ENCODE measurements at regions of chr12 and their contacts with region 1.

Region 1: DNA sequence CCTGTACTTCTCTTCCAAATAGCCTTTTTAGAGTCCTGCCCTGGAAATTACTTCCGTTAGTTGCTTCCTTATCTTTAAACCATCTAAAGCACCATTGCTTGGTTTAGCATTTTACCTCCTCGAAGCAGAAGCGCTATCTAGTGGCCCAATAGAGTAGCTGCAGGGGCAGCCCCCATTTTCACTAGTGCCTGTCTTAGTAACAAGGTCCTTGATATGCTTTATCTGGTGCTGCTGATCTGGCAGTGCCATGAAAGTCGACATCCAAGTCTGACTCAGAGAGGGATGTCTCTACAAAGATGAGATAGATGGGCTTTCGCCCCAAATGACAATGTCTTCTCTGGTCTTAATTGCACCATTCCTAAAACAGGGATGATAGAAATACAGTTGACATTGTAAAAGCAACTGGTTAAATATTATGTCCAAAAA is 25.0 kb upstream of the CIT start:
- DNase-seq: peak; percentile 27
- ATAC-seq: peak; percentile 82
- H3K4me3 Mint-ChIP-seq: no peak overlapping the region
- H3K27ac Mint-ChIP-seq: no peak overlapping the region
- H3K4me1 Mint-ChIP-seq: peaks cover 4% of the 10 kb centered on the region
- H3K27me3 Mint-ChIP-seq: no peaks in the 10 kb centered on the region
- CTCF ChIP-seq: no peak

Region 2: DNA sequence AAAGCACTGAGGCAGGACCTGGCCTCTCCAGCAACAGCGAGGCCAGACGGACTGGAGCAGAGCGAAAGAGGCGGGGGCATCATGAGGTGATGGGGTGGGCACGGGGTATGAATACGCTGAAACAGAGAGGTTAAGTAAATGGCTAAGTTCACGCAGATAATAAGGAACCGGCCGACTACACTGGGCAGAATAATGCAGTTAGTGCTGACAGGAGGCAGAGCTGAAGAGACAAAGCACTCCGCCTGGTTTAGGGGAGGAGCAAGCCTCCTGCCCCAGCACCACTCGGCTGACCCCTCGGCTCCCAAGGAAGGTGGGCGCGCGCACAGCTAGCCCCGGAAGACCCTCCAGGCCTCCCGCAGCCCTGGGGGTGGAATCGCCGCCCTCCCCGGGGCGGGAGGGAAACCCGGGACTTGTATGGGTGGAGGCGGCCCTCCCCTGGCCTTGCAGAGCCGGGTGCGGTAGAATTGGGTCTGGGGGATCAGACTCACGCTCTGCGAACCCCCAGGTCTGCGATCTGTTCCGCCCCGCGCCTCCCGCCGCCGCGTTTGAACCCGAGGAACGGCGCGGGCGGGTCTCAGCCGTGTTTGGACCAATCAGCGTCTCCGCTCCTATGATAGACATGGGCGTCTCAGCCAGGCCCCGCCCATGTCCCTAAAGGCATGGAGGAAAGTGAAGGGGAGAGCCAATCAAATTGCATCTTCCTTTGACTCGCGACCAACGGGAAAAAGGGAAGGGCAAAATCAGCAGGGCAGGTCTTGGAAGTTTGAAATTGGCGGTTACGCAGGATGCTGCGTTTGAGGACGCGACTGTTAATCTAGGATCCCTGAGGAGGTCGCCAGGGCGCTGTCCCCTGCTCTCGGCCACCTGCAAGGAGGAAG is 25.1 kb before region 1 on chr12 and contains the start of gene CIT:
- CTCF ChIA-PET with region 1: interaction called, 6 read pairs
- POLR2A ChIA-PET with region 1: no interaction called
- intact Hi-C with region 1: loop called (anchors 1 kb)
- DNase-seq: peak; percentile 72
- ATAC-seq: peak; percentile 100
- H3K4me3 Mint-ChIP-seq: peak within 1 kb of the TSS; percentile 91
- H3K27ac Mint-ChIP-seq: peak within 1 kb of the TSS; percentile 0
- H3K4me1 Mint-ChIP-seq: peaks cover 12% of the 10 kb centered on the region
- H3K27me3 Mint-ChIP-seq: peaks cover 2% of the 10 kb centered on the region
- CTCF ChIP-seq: no peak
- total RNA-seq, gene CIT: 3.6 and 6.1 TPM in 2 replicates

Region 3: GRCh38 chr12:119942386-119942785 is 40.3 kb after region 1 on chr12:
- CTCF ChIA-PET with region 1: no interaction called
- POLR2A ChIA-PET with region 1: no interaction called
- intact Hi-C with region 1: no loop called
- DNase-seq: no peak
- ATAC-seq: no peak
- H3K4me3 Mint-ChIP-seq: no peak overlapping the region
- H3K27ac Mint-ChIP-seq: no peak overlapping the region
- H3K4me1 Mint-ChIP-seq: no peaks in the 10 kb centered on the region
- H3K27me3 Mint-ChIP-seq: peaks cover 10% of the 10 kb centered on the region
- CTCF ChIP-seq: no peak

Region 4: DNA sequence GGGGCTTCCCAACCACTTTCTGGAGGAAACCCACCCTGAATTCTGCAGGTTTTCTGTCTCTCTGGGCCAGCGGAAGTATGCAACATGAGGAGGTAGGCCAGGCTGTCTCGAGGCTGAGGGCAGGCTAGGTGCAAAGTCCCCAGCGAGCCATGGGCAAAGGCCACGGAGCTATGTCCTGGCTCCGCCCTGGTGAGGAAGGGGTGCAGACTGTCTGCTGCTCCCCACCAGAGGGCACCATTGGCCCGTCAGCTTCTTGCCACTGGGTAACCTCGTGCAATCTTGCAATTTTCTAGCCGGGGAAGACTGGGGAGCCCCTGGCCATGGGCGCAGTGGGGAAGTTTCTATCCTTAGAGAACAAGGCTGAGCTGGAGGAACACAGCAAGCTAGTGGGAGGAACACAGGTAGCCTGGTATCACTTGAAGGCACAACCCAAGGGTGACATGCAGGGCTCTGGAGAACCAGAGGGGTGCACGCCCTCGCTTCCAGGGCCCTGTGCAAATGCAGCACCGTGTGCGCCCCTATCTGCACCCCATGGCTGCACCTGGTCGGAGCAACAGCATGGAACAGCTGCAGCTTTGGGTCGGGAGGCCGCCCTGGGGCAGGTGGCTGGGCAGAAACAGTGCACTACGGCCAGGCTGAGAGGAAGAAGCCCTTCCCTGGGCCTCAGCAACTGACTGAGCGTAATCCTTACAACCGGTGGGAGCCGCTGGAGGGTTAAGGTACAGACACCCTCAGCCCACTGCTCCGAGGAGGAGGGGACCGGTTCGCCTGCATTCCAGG is 326.4 kb after region 1 on chr12:
- CTCF ChIA-PET with region 1: no interaction called
- POLR2A ChIA-PET with region 1: no interaction called
- intact Hi-C with region 1: no loop called
- DNase-seq: peak; percentile 74
- ATAC-seq: peak; percentile 93
- H3K4me3 Mint-ChIP-seq: no peak overlapping the region
- H3K27ac Mint-ChIP-seq: no peak overlapping the region
- H3K4me1 Mint-ChIP-seq: peaks cover 44% of the 10 kb centered on the region
- H3K27me3 Mint-ChIP-seq: peaks cover 25% of the 10 kb centered on the region
- CTCF ChIP-seq: peak; percentile 39

Measured in activated B cell treated with CpG ODN at 0.5 μM for 24 hours (primary cell).